ENCODE measurements at regions of chr10 and their contacts with region 1.

Region 1: DNA sequence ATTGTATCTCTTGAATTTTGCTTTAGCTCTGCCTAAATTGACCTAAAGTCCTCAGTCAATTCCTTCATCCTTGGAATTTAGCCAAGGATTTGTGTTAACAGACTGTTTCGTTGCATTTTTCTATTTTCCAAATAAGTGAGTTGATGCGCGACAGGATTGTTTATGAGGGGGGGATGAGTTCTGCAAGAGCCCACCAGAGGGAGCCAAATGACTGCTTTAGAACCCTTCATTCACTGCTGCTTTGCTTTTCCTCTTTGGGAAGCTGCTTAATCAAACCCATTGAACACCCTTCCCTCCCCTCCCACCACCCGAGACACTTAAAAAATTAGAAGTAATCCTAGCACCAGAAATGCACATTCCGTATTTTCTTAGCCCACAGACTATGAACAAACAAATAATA is 33.7 kb upstream of the PTF1A start:
- DNase-seq: peak; percentile 58
- ATAC-seq: peak; percentile 93
- H3K4me3 ChIP-seq: no peak overlapping the region
- H3K27ac ChIP-seq: no peak overlapping the region
- H3K4me1 ChIP-seq: no peaks in the 10 kb centered on the region
- H3K27me3 ChIP-seq: peaks cover 2% of the 10 kb centered on the region; the same call in 1 of the 2 replicates
- CTCF ChIP-seq: peak; percentile 89
- POLR2A ChIP-seq: no peak
- RAD21 ChIP-seq: peak; percentile 86

Region 2: GRCh38 chr10:22911889-22912762 is 246.2 kb before region 1 on chr10:
- CTCF ChIA-PET with region 1: no interaction called
- POLR2A ChIA-PET with region 1: no interaction called
- dilution Hi-C with region 1: no loop called
- in situ Hi-C with region 1: no loop called
- intact Hi-C with region 1: no loop called
- DNase-seq: no peak
- ATAC-seq: no peak
- H3K4me3 ChIP-seq: no peak overlapping the region
- H3K27ac ChIP-seq: no peak overlapping the region
- H3K4me1 ChIP-seq: no peaks in the 10 kb centered on the region
- H3K27me3 ChIP-seq: no peaks in the 10 kb centered on the region
- CTCF ChIP-seq: no peak
- POLR2A ChIP-seq: no peak
- RAD21 ChIP-seq: no peak

Region 3: GRCh38 chr10:23171223-23171876 is 13.0 kb after region 1 on chr10:
- CTCF ChIA-PET with region 1: interaction called, 12 read pairs
- POLR2A ChIA-PET with region 1: no interaction called
- dilution Hi-C with region 1: no loop called
- in situ Hi-C with region 1: no loop called
- intact Hi-C with region 1: no loop called
- DNase-seq: peak; percentile 32
- ATAC-seq: peak; percentile 53; the same call in 1 of the 2 replicates
- H3K4me3 ChIP-seq: no peak overlapping the region
- H3K27ac ChIP-seq: no peak overlapping the region
- H3K4me1 ChIP-seq: no peaks in the 10 kb centered on the region
- H3K27me3 ChIP-seq: peaks cover 25% of the 10 kb centered on the region
- CTCF ChIP-seq: no peak
- POLR2A ChIP-seq: no peak
- RAD21 ChIP-seq: no peak

Region 4: GRCh38 chr10:23525406-23525805 is 367.0 kb after region 1 on chr10:
- CTCF ChIA-PET with region 1: interaction called, 3 read pairs
- POLR2A ChIA-PET with region 1: no interaction called
- dilution Hi-C with region 1: no loop called
- in situ Hi-C with region 1: loop called (anchors 25 kb)
- intact Hi-C with region 1: loop called (anchors 2 kb)
- DNase-seq: peak; percentile 7
- ATAC-seq: peak; percentile 71
- H3K4me3 ChIP-seq: no peak overlapping the region
- H3K27ac ChIP-seq: no peak overlapping the region
- H3K4me1 ChIP-seq: no peaks in the 10 kb centered on the region
- H3K27me3 ChIP-seq: no peaks in the 10 kb centered on the region
- CTCF ChIP-seq: peak; percentile 39
- POLR2A ChIP-seq: no peak
- RAD21 ChIP-seq: peak; percentile 51

Region 5: DNA sequence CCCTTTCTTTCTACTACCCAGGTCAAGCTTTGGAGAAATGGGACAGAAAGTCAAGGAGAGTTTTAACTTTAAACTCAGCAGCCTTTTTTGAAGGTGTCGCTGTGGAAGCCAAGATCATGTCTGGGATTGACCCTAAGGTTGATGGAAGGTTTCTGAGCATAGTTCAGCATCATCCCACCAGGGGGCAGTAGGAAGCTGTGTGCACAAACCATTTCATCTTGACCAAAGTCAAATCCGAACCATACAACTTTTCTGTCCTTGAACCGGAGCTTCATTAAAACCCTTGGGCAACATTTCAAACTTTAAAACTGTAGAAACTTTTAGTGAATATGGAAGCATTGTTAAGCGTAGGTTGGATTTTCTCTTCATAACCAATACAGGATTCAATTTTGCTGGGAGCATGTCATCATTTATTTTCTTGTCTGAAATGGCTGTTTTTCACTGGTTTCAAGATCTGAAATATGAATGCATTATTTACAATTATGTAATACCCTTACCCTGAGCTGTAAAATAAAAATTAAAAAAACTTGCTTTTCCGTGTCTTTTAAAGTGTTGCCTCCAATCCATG is 836.2 kb after region 1 on chr10:
- CTCF ChIA-PET with region 1: interaction called, 4 read pairs
- POLR2A ChIA-PET with region 1: no interaction called
- dilution Hi-C with region 1: no loop called
- in situ Hi-C with region 1: no loop called
- intact Hi-C with region 1: loop called (anchors 2 kb)
- DNase-seq: peak; percentile 39
- ATAC-seq: peak; percentile 70
- H3K4me3 ChIP-seq: no peak overlapping the region
- H3K27ac ChIP-seq: no peak overlapping the region
- H3K4me1 ChIP-seq: no peaks in the 10 kb centered on the region
- H3K27me3 ChIP-seq: no peaks in the 10 kb centered on the region
- CTCF ChIP-seq: peak; percentile 70
- POLR2A ChIP-seq: no peak
- RAD21 ChIP-seq: peak; percentile 77

Region 6: DNA sequence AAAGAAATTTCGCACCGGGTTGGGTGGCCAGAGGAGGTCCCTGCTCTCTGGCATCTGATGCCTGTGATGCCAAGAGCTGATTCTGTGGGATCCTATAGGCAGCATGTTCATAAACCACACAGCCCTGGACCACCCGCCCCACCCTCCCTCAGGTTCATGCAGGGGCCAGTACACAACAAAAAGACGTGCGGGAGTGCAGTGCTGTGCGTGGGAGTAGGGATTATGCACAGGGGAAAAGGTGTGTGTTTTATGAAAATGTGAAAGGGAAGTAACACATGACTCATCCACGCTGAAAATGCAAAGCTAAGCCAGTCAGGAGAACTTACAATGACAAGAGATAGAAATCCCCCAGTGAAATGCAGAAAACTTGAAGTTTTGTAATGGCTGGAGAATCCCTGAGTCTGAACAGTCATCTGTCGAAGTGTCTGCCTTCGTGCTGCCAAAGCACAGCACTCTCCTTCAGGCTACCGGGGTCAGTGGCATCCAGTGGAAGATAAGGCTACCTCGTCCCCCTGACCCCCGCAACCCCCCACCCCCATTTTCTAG is 1051.6 kb after region 1 on chr10:
- CTCF ChIA-PET with region 1: no interaction called
- POLR2A ChIA-PET with region 1: no interaction called
- dilution Hi-C with region 1: no loop called
- in situ Hi-C with region 1: loop called (anchors 25 kb)
- intact Hi-C with region 1: no loop called
- DNase-seq: peak; percentile 71
- ATAC-seq: peak; percentile 35
- H3K4me3 ChIP-seq: no peak overlapping the region
- H3K27ac ChIP-seq: no peak overlapping the region
- H3K4me1 ChIP-seq: peaks cover 4% of the 10 kb centered on the region; the same call in 1 of the 2 replicates
- H3K27me3 ChIP-seq: peaks cover 3% of the 10 kb centered on the region
- CTCF ChIP-seq: no peak
- POLR2A ChIP-seq: no peak
- RAD21 ChIP-seq: no peak

Region 7: GRCh38 chr10:24503461-24504320 is 1345.3 kb after region 1 on chr10:
- CTCF ChIA-PET with region 1: no interaction called
- POLR2A ChIA-PET with region 1: no interaction called
- dilution Hi-C with region 1: no loop called
- in situ Hi-C with region 1: loop called (anchors 25 kb)
- intact Hi-C with region 1: no loop called
- DNase-seq: peak; percentile 90
- ATAC-seq: peak; percentile 95
- H3K4me3 ChIP-seq: no peak overlapping the region
- H3K27ac ChIP-seq: peak overlapping the region; percentile 2; the same call in 1 of the 2 replicates
- H3K4me1 ChIP-seq: peaks cover 4% of the 10 kb centered on the region; the same call in 1 of the 2 replicates
- H3K27me3 ChIP-seq: no peaks in the 10 kb centered on the region
- CTCF ChIP-seq: peak; percentile 68
- POLR2A ChIP-seq: no peak
- RAD21 ChIP-seq: peak; percentile 88

Region 8: DNA sequence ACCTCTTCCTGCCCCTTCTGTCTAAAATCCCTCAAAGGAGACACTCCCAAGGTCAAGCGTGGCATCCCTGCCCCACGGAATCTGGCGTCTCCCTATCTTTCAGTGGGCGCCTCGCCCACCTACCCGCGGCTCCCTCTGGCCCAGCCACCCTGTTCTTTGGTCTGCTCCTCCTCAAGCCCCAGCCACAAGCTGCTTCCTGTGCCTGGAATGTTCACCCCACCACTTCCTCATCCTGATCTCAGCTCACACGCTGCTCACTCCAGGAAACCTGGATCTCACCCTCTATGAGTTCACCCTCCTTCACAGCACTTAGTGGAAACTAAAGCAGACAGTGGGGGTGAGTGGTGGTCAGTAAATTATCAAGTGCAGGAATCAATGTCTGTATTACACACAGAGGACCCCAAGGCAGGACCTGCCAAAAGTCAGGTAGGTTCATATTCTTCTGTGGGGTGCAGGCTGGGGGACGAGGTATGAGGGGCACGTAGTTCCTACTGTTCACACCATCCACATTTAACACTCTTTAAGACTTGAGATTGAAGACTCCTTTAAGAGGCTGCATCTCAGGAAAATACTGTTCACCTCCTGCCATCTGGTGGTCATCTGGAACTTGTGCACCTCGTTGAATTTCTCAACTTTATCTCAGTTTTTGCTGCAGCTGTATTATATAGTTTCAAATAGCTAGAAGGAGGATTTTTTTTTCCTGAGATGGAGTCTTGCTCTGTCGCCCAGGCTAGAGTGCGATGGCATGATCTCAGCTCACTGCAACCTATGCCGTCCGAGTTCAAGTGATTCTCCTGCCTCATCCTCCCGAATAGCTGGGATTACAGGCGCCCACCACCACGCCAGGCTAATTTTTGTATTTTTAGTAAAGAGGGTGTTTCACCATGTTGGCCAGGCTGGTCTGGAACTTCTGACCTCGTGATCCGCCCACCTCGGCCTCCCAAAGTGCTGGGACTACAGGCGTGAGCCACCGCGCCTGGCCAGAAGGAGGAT is 1398.7 kb after region 1 on chr10:
- CTCF ChIA-PET with region 1: interaction called, 4 read pairs
- POLR2A ChIA-PET with region 1: no interaction called
- dilution Hi-C with region 1: no loop called
- in situ Hi-C with region 1: no loop called
- intact Hi-C with region 1: loop called (anchors 1 kb)
- DNase-seq: peak; percentile 79
- ATAC-seq: peak; percentile 93
- H3K4me3 ChIP-seq: no peak overlapping the region
- H3K27ac ChIP-seq: no peak overlapping the region
- H3K4me1 ChIP-seq: no peaks in the 10 kb centered on the region
- H3K27me3 ChIP-seq: peaks cover 3% of the 10 kb centered on the region; the same call in 1 of the 2 replicates
- CTCF ChIP-seq: peak; percentile 75
- POLR2A ChIP-seq: no peak
- RAD21 ChIP-seq: peak; percentile 65

Measured in IMR-90 (cell line).